AG04449 (cell line): ENCODE measurements at regions of chr9 and their contacts with region 1.

Region 1: GRCh38 chr9:34500623-34501267 is 22.0 kb downstream of the ENHO start:
- DNase-seq: no peak
- H3K4me3 ChIP-seq: no peak overlapping the region
- CTCF ChIP-seq: peak; percentile 90

Region 2: GRCh38 chr9:34252670-34253459 is 247.9 kb before region 1 on chr9:
- CTCF ChIA-PET with region 1: no interaction called
- POLR2A ChIA-PET with region 1: no interaction called
- DNase-seq: no peak
- H3K4me3 ChIP-seq: no peak overlapping the region
- CTCF ChIP-seq: peak; percentile 82

Region 3: GRCh38 chr9:34430843-34431437 is 69.8 kb before region 1 on chr9:
- CTCF ChIA-PET with region 1: interaction called, 54 read pairs
- POLR2A ChIA-PET with region 1: no interaction called
- DNase-seq: peak; percentile 74
- H3K4me3 ChIP-seq: no peak overlapping the region
- CTCF ChIP-seq: no peak

Region 4: DNA sequence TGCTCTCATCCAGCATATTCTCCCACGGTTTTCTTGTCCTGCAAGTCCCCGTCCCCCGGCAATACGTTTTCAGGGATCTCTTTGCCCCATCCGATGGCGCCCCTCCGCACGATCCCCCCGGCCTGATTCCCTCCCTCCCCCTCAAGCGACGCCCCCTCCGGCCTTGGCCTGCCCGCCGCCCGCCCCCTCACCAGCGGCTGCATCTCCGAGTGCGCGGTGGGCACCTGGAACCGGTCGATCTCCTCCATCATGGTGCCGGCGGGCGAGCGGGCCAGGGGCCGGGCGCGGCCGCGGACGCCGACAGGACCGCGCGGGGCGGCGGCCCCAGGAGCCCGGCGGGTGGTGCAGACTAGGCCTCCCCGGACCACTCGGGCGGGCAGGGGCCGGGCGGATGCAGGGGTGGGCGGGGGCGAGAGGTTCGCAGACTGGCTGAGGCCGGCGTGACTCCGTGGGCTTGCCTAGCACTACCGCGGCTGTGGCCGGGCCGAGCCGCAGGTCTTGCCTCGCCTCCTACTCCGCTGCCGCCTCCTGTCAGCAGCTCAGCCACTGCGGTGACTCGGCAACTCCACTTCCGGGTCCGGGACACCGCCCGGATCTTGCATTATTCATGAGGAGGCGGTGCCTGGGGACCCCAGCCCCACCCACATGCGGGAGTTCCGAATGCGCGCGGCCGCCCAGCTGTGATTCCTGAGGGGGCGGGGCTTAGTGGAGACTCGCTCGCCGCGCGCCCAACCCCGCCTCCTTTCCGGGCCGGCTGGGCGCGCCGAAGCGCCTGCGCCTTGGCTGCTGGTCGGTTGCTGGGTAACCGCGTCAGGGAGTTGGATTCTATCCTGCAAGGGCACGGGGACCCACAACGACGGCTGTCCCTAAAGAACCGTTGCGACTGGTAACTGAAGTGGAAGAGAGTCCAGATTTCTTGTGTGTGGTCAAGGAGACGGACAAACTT is 42.5 kb before region 1 on chr9 and contains the starts of genes DNAI1 and FAM219A:
- CTCF ChIA-PET with region 1: interaction called, 34 read pairs
- POLR2A ChIA-PET with region 1: no interaction called
- DNase-seq: peak; percentile 84
- H3K4me3 ChIP-seq: peak within 1 kb of the TSS; percentile 84
- CTCF ChIP-seq: no peak

Region 5: GRCh38 chr9:34513567-34514214 is 12.9 kb after region 1 on chr9:
- CTCF ChIA-PET with region 1: interaction called, 97 read pairs
- POLR2A ChIA-PET with region 1: interaction called, 3 read pairs
- DNase-seq: no peak
- H3K4me3 ChIP-seq: no peak overlapping the region
- CTCF ChIP-seq: no peak

Region 6: DNA sequence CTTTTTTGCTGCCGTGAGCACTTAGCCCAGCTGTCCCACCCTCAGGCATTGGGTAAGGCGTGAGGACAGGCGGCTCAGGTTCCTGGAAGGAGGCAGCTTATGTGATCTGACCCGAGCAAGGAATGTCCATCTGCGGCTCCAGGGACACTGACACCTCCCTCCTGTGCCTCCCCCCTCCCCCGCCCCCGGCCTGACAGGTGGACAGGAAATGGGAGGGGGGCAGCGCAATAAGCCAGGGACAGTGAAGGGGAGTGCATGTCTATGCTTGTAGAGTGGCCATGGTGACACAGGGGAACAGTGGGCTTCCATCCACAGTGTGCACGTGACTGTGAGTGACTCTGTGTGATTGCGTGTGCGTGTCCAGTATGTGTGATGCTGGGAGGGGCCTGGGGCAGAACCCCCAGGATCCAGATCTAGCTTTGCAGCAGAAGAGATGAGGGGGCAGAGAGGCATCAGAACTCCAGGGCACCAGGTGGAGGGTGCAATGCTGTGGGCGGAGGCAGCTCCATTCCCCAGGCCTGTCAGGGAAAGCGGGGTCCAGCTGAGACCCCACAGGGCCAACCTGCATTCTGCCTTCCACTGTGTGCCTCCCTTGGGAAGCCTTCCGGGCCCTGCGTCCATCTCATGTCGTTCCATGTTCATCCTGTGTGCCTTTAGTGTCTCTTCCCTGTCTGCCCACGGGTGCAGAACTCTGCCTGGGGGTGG is 58.3 kb after region 1 on chr9:
- CTCF ChIA-PET with region 1: no interaction called
- POLR2A ChIA-PET with region 1: no interaction called
- DNase-seq: no peak
- H3K4me3 ChIP-seq: no peak overlapping the region
- CTCF ChIP-seq: no peak

Region 7: GRCh38 chr9:34603610-34604231 is 103.0 kb after region 1 on chr9:
- CTCF ChIA-PET with region 1: interaction called, 31 read pairs
- POLR2A ChIA-PET with region 1: no interaction called
- DNase-seq: no peak
- H3K4me3 ChIP-seq: no peak overlapping the region
- CTCF ChIP-seq: peak; percentile 88

Region 8: GRCh38 chr9:34759432-34760134 is 258.8 kb after region 1 on chr9:
- CTCF ChIA-PET with region 1: no interaction called
- POLR2A ChIA-PET with region 1: no interaction called
- DNase-seq: no peak
- H3K4me3 ChIP-seq: no peak overlapping the region
- CTCF ChIP-seq: no peak